Calu3 (cell line): ENCODE measurements at regions of chr7 and their contacts with region 1.

Region 1: GRCh38 chr7:22295402-22296264 is 61.3 kb downstream of the RAPGEF5 start:
- DNase-seq: no peak
- H3K4me3 Mint-ChIP-seq: no peak overlapping the region
- H3K27ac Mint-ChIP-seq: peak overlapping the region; percentile 37
- H3K4me1 Mint-ChIP-seq: peaks cover 18% of the 10 kb centered on the region
- H3K27me3 Mint-ChIP-seq: no peaks in the 10 kb centered on the region
- CTCF ChIP-seq: no peak

Region 2: GRCh38 chr7:22127835-22128527 is 167.7 kb before region 1 on chr7:
- CTCF ChIA-PET with region 1: no interaction called
- intact Hi-C with region 1: loop called (anchors 5 kb)
- DNase-seq: no peak
- H3K4me3 Mint-ChIP-seq: no peak overlapping the region
- H3K27ac Mint-ChIP-seq: no peak overlapping the region
- H3K4me1 Mint-ChIP-seq: no peaks in the 10 kb centered on the region
- H3K27me3 Mint-ChIP-seq: no peaks in the 10 kb centered on the region
- CTCF ChIP-seq: no peak

Region 3: GRCh38 chr7:22488643-22489462 is 193.2 kb after region 1 on chr7:
- CTCF ChIA-PET with region 1: no interaction called
- intact Hi-C with region 1: loop called (anchors 1 kb)
- DNase-seq: peak; percentile 85
- H3K4me3 Mint-ChIP-seq: no peak overlapping the region
- H3K27ac Mint-ChIP-seq: no peak overlapping the region
- H3K4me1 Mint-ChIP-seq: peaks cover 22% of the 10 kb centered on the region
- H3K27me3 Mint-ChIP-seq: no peaks in the 10 kb centered on the region
- CTCF ChIP-seq: peak; percentile 97